ENCODE measurements at regions of chr9 and their contacts with region 1.

Region 1: DNA sequence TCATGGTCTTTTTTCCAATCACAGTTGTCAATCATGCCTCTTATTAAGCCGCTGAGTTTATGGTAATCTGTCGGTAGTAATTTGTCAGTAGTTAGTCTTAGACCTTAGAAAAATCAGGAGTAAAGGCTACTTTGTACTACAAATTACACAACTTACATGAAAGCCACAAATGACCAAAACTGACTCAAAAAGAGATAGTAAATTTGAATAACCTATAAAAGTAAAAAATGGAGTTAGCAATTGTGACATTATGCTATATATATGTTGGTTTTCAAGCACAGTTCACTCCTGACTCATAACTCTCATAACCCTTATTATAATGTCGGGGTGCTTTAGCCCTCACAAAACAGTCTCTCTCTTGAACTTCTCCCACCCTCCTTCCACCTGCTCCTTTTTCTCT is 251.8 kb downstream of the ROR2 start:
- DNase-seq: no peak
- ATAC-seq: no peak
- H3K4me3 ChIP-seq: no peak overlapping the region
- H3K27ac ChIP-seq: no peak overlapping the region
- H3K4me1 ChIP-seq: no peaks in the 10 kb centered on the region
- H3K27me3 ChIP-seq: no peaks in the 10 kb centered on the region
- CTCF ChIP-seq: no peak

Region 2: GRCh38 chr9:91534374-91534773 is 163.9 kb before region 1 on chr9:
- CTCF ChIA-PET with region 1: no interaction called
- POLR2A ChIA-PET with region 1: no interaction called
- in situ Hi-C with region 1: no loop called
- intact Hi-C with region 1: loop called (anchors 5 kb)
- DNase-seq: no peak
- ATAC-seq: no peak
- H3K4me3 ChIP-seq: no peak overlapping the region
- H3K27ac ChIP-seq: no peak overlapping the region
- H3K4me1 ChIP-seq: no peaks in the 10 kb centered on the region
- H3K27me3 ChIP-seq: no peaks in the 10 kb centered on the region
- CTCF ChIP-seq: no peak

Region 3: GRCh38 chr9:91718071-91718470 is 19.8 kb after region 1 on chr9:
- CTCF ChIA-PET with region 1: interaction called, 13 read pairs
- POLR2A ChIA-PET with region 1: no interaction called
- in situ Hi-C with region 1: no loop called
- intact Hi-C with region 1: no loop called
- DNase-seq: no peak
- ATAC-seq: no peak
- H3K4me3 ChIP-seq: no peak overlapping the region
- H3K27ac ChIP-seq: no peak overlapping the region
- H3K4me1 ChIP-seq: no peaks in the 10 kb centered on the region
- H3K27me3 ChIP-seq: no peaks in the 10 kb centered on the region
- CTCF ChIP-seq: no peak